ENCODE measurements at regions of chr20 and their contacts with region 1.

Region 1: GRCh38 chr20:17431621-17432364 is 99.4 kb downstream of the BFSP1 start:
- DNase-seq: peak; percentile 44
- ATAC-seq: peak; percentile 75
- H3K4me3 ChIP-seq: no peak overlapping the region
- H3K27ac ChIP-seq: no peak overlapping the region
- H3K4me1 ChIP-seq: no peaks in the 10 kb centered on the region
- H3K27me3 ChIP-seq: peaks cover 16% of the 10 kb centered on the region
- CTCF ChIP-seq: peak; percentile 76
- POLR2A ChIP-seq: no peak
- RAD21 ChIP-seq: peak; percentile 69

Region 2: GRCh38 chr20:17226410-17227218 is 205.2 kb before region 1 on chr20 and contains the start of gene PCSK2:
- CTCF ChIA-PET with region 1: no interaction called
- POLR2A ChIA-PET with region 1: no interaction called
- dilution Hi-C with region 1: no loop called
- in situ Hi-C with region 1: no loop called
- intact Hi-C with region 1: loop called (anchors 2 kb)
- DNase-seq: peak; percentile 57
- ATAC-seq: peak; percentile 96
- H3K4me3 ChIP-seq: peak within 1 kb of the TSS; percentile 4
- H3K27ac ChIP-seq: no peak within 1 kb of the TSS
- H3K4me1 ChIP-seq: no peaks in the 10 kb centered on the region; the same call in 1 of the 2 replicates
- H3K27me3 ChIP-seq: peaks cover 18% of the 10 kb centered on the region
- CTCF ChIP-seq: no peak
- POLR2A ChIP-seq: no peak
- RAD21 ChIP-seq: no peak
- total RNA-seq, gene PCSK2: not detected in 2 replicates

Region 3: GRCh38 chr20:17421493-17421892 is 10.3 kb before region 1 on chr20:
- CTCF ChIA-PET with region 1: no interaction called
- POLR2A ChIA-PET with region 1: no interaction called
- dilution Hi-C with region 1: no loop called
- in situ Hi-C with region 1: no loop called
- intact Hi-C with region 1: no loop called
- DNase-seq: no peak
- ATAC-seq: no peak
- H3K4me3 ChIP-seq: no peak overlapping the region
- H3K27ac ChIP-seq: no peak overlapping the region
- H3K4me1 ChIP-seq: no peaks in the 10 kb centered on the region
- H3K27me3 ChIP-seq: no peaks in the 10 kb centered on the region
- CTCF ChIP-seq: no peak
- POLR2A ChIP-seq: no peak
- RAD21 ChIP-seq: no peak

Region 4: DNA sequence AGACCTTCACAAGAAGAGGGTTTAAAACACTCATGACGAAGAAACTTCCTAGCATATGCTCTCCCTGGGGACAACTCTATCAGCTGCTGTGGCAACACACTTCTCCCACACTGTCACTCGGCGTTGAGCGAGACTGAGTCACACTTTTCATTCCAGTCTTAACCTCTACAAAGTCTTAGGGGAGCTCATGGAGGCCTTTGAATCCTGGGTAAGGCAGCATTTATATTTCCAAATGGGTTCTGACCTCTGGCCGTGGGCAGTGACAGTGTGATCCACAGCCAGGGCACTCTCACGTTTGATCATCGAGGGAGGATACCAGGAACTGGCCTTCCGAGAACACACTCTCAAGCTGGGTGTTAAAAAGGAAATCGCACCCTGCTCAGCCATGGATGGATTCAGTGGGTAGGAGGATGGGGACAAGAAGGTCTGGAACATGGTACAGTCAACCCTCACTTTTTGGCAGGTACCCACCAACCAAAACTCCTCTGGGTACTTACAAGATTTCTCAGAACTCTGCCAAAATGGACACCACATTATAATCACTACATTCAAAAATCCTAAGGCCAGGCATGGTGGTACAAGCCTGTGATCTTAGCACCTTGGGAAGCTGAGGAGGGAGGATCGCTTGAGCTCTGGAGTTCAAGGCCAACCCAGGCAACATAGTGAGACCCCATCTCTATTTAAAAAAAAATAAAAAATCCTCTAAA is 230.7 kb after region 1 on chr20:
- CTCF ChIA-PET with region 1: no interaction called
- POLR2A ChIA-PET with region 1: no interaction called
- dilution Hi-C with region 1: no loop called
- in situ Hi-C with region 1: no loop called
- intact Hi-C with region 1: no loop called
- DNase-seq: peak; percentile 48
- ATAC-seq: 0 out of 2 replicates have a peak, but pooled peaks have one; percentile 30
- H3K4me3 ChIP-seq: no peak overlapping the region
- H3K27ac ChIP-seq: peak overlapping the region; percentile 31; the same call in 1 of the 2 replicates
- H3K4me1 ChIP-seq: peaks cover 32% of the 10 kb centered on the region
- H3K27me3 ChIP-seq: no peaks in the 10 kb centered on the region
- CTCF ChIP-seq: no peak
- POLR2A ChIP-seq: no peak
- RAD21 ChIP-seq: no peak

Region 5: DNA sequence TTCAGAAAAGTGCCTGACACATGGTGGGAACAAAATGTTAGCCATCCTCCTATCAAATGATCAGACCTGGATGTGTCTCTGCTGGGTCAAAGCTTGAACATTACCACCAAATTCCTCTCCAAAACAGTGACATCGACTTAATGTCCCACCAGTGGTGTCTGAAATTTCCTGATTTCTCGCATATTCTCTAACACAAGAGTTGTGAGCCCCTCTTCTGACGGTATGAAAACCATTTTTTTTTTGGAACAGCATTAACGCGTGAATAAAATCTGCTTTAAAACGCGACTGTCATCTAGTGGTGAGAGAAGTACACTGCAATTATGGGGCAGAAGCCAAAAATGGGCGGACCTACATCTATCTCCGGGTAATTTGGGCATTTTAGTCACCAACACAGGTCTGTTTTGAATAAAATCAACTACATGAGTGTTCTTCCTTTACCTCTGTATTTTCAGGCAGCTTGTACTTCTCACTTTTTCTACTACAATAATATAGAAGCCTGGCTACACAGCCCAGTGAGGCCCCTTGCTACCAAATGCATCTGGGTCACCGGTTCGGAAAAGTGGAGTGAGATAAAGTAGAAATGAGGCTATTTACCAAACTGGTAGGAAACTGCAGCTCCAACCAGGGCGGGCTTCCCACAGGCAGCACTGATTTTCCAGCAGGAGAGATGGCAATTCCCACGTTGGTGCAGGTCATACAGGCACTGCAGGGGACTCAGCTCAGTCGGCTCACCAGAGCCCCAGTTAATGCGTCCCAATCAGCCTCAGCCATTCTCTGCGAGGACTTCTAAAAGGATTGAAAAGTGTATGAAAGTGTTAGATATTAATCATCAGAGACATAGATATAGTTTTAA is 564.4 kb after region 1 on chr20:
- CTCF ChIA-PET with region 1: interaction called, 3 read pairs
- POLR2A ChIA-PET with region 1: no interaction called
- dilution Hi-C with region 1: no loop called
- in situ Hi-C with region 1: no loop called
- intact Hi-C with region 1: loop called (anchors 5 kb)
- DNase-seq: peak; percentile 74
- ATAC-seq: peak; percentile 91
- H3K4me3 ChIP-seq: no peak overlapping the region
- H3K27ac ChIP-seq: no peak overlapping the region
- H3K4me1 ChIP-seq: no peaks in the 10 kb centered on the region
- H3K27me3 ChIP-seq: peaks cover 4% of the 10 kb centered on the region; the same call in 1 of the 2 replicates
- CTCF ChIP-seq: peak; percentile 99
- POLR2A ChIP-seq: 0 out of 2 replicates have a peak, but pooled peaks have one; percentile 27
- RAD21 ChIP-seq: peak; percentile 94